Activated naive CD4-positive, alpha-beta T cell treated with anti-CD3 and anti-CD28 coated beads for 36 hours (primary cell): ENCODE measurements at regions of chr1 and their contacts with region 1.

Region 1: GRCh38 chr1:155744711-155745283 is 55.9 kb downstream of the DAP3 start:
- DNase-seq: no peak
- H3K4me3 Mint-ChIP-seq: peak overlapping the region; percentile 87
- H3K27ac Mint-ChIP-seq: peak overlapping the region; percentile 84
- H3K4me1 Mint-ChIP-seq: peaks cover 6% of the 10 kb centered on the region
- H3K27me3 Mint-ChIP-seq: no peaks in the 10 kb centered on the region

Region 2: DNA sequence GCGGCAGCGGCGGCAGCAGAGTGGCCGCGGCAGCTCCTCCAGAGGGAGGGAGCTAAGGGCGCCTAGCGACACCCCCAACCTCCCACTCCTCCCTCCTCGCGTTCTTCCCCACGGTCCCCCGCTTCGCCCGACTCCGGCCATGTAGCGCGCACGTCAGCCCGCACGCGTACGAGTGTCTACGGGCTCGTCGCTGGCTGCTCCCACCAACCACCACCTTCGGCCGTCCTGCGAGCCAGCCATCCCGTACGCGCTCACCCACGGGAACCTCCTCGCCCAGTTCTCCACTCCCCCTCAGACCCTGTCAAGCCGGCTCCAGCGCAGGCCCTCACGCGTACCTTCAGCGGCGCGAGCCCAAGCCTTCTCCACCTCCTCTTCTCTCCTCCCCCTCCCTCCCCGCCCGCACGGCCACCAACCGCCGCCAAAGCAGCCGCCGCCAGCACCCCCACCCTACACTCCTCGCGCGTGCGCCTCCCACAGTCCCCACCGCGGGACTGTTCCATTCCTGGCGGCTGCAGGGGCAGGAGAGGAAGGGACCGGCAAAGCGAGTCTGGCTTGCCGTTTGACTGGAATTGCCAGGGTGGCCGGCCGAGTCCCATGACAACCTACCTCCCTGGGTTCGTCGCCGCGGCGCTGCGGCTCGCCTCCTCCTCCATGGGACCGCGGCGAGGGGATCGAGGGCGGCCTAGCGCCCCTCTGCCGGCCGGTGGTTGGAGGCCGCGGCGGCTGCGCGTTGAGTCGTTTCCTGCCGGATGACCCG is 56.3 kb before region 1 on chr1 and contains the start of gene YY1AP1:
- CTCF ChIA-PET with region 1: interaction called, 5 read pairs
- intact Hi-C with region 1: loop called (anchors 2 kb)
- DNase-seq: peak; percentile 93
- H3K4me3 Mint-ChIP-seq: peak within 1 kb of the TSS; percentile 97
- H3K27ac Mint-ChIP-seq: peak within 1 kb of the TSS; percentile 95
- H3K4me1 Mint-ChIP-seq: peaks cover 70% of the 10 kb centered on the region
- H3K27me3 Mint-ChIP-seq: no peaks in the 10 kb centered on the region
- total RNA-seq, gene YY1AP1: 54.8 to 59.5 TPM

Region 3: GRCh38 chr1:155911156-155912055 is 166.6 kb after region 1 on chr1 and contains the start of gene RIT1:
- CTCF ChIA-PET with region 1: no interaction called
- intact Hi-C with region 1: loop called (anchors 10 kb)
- DNase-seq: peak; percentile 89
- H3K4me3 Mint-ChIP-seq: peak within 1 kb of the TSS; percentile 99
- H3K27ac Mint-ChIP-seq: peak within 1 kb of the TSS; percentile 97
- H3K4me1 Mint-ChIP-seq: peaks cover 21% of the 10 kb centered on the region
- H3K27me3 Mint-ChIP-seq: no peaks in the 10 kb centered on the region
- total RNA-seq, gene RIT1: 17.1 to 21.3 TPM